ENCODE measurements at regions of chr17 and their contacts with region 1.

Region 1: DNA sequence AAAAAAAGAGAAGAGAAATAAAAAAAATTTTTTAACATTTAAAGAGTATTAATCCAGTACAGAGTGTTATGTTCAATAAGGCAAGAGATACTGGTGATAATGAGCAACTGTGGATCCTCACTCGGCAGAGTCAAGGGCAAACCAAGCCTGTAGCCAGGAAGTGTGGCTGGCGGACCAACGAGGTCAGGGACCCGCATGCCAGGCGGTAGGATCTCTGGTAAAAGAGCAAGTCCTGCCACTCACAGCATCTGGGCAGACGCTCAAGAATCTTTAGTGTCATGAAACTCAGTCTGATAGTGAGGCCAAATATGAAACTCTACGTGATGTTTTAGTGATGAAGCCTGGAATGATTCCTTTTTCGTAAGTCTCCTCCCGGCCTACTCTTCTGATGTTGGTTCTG is 8.3 kb upstream of the GEMIN4 start:
- DNase-seq: no peak
- ATAC-seq: no peak
- H3K4me3 ChIP-seq: no peak overlapping the region
- H3K4me3 Mint-ChIP-seq: no peak overlapping the region
- H3K27ac ChIP-seq: no peak overlapping the region
- H3K27ac Mint-ChIP-seq: no peak overlapping the region
- H3K4me1 ChIP-seq: no peaks in the 10 kb centered on the region
- H3K4me1 Mint-ChIP-seq: no peaks in the 10 kb centered on the region
- H3K27me3 ChIP-seq: no peaks in the 10 kb centered on the region
- H3K27me3 Mint-ChIP-seq: no peaks in the 10 kb centered on the region

Region 2: GRCh38 chr17:740240-741017 is 19.9 kb before region 1 on chr17:
- CTCF ChIA-PET with region 1: no interaction called
- POLR2A ChIA-PET with region 1: no interaction called
- DNase-seq: peak in 7 of 35 experiments; percentile 9 to 49 (median 14)
- ATAC-seq: peak in 3 of 4 experiments; percentile 27 to 90 (median 35)
- H3K4me3 ChIP-seq: no peak overlapping the region
- H3K4me3 Mint-ChIP-seq: peak overlapping the region in 2 of 3 donors; percentile 39 to 43
- H3K27ac ChIP-seq: no peak overlapping the region
- H3K27ac Mint-ChIP-seq: peak overlapping the region; percentile 8 to 36
- H3K4me1 ChIP-seq: peaks cover 0 to 3% of the 10 kb centered on the region in 2 experiments
- H3K4me1 Mint-ChIP-seq: peaks cover 6 to 7% (median 7%) of the 10 kb centered on the region in 3 donors
- H3K27me3 ChIP-seq: no peaks in the 10 kb centered on the region
- H3K27me3 Mint-ChIP-seq: no peaks in the 10 kb centered on the region

Region 3: GRCh38 chr17:856149-856548 is 95.8 kb after region 1 on chr17:
- CTCF ChIA-PET with region 1: no interaction called
- POLR2A ChIA-PET with region 1: interaction called in 1 of 2 experiments, 11 read pairs
- DNase-seq: no peak
- ATAC-seq: no peak
- H3K4me3 ChIP-seq: no peak overlapping the region
- H3K4me3 Mint-ChIP-seq: no peak overlapping the region
- H3K27ac ChIP-seq: no peak overlapping the region
- H3K27ac Mint-ChIP-seq: no peak overlapping the region
- H3K4me1 ChIP-seq: no peaks in the 10 kb centered on the region
- H3K4me1 Mint-ChIP-seq: no peaks in the 10 kb centered on the region
- H3K27me3 ChIP-seq: peaks cover 0 to 5% of the 10 kb centered on the region in 2 experiments
- H3K27me3 Mint-ChIP-seq: peaks cover 5 to 18% of the 10 kb centered on the region in 2 donors

Measured in T-cell (primary cell).